Activated CD4-positive, alpha-beta T cell treated with anti-CD3 and anti-CD28 coated beads for 36 hours (primary cell): ENCODE measurements at regions of chr17 and their contacts with region 1.

Region 1: DNA sequence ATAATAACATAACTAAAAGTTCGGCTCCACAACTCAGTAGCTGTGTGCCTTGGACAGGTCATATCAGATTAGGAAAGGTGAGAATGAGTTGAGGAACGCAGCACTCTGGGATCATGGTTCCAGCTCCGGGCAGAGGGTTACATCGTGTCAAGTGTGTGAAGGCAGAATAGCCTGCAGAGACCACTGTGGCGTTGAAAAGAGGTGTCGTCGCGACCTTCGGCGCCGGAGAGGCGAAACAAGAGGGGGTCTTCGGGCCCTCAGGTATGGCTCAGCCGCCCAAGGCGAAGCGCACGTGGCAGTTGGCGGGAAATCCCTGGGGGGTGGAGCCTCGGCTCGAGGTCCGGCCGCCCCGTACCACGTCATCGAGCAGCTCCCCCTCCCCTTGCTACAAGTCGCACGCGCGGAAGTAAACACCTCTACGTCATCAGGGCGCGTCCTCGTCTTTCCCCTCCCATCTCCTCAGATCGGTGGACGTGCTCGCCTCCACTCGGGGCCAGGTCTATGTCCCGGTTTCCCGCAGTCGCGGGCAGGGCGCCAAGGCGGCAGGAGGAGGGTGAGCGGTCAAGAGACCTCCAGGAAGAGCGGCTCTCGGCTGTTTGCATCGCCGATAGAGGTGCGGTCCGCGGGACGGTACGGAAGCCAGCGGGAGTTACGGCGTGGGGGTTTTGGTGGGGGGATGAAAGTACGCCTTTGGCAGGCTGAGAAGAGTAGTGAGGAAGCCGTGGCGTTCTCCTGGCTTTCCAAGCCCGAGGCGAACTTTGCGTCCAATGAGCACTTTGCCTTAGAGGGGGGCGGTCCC is at the start of gene DHX40:
- DNase-seq: peak; percentile 98
- ATAC-seq: peak; percentile 89
- H3K4me3 Mint-ChIP-seq: peak within 1 kb of the TSS; percentile 99
- H3K27ac Mint-ChIP-seq: peak within 1 kb of the TSS; percentile 99
- H3K4me1 Mint-ChIP-seq: peaks cover 20% of the 10 kb centered on the region
- H3K27me3 Mint-ChIP-seq: no peaks in the 10 kb centered on the region
- total RNA-seq, gene DHX40: 22.9 to 24.1 TPM

Region 2: DNA sequence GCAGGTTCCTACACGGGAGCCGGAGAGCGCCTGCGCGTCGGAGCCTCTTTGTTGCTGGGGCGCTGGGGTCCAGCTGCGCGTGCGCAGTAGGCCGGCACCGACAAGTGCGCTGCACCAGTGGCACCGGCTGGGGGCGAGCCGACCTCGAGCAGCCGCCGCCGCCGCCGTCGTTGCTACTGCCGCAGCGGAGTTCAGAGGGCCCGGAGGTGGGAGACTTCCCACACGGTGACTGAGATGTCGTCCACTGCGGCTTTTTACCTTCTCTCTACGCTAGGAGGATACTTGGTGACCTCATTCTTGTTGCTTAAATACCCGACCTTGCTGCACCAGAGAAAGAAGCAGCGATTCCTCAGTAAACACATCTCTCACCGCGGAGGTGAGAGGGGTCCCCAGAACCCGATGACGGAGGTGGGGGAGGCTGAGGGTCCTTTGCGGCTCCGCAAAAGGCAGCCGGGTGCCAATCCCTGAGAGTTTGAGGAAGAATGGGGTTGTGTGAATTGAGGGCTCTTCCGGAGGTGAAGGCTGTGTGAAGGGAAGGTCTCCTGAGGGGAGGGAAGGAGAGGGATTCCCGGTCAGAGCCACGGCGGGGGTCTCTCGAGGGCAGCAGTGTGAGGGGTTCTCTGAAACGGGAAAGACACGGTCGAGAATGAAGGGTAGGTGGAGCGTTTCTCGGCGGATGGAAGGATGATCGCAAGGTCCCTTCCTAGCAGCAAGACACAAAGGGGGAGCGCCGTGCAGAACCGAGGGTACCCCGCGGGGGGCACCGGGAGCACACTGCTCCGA is 344.8 kb before region 1 on chr17 and contains the start of gene GDPD1:
- CTCF ChIA-PET with region 1: no interaction called
- POLR2A ChIA-PET with region 1: no interaction called
- intact Hi-C with region 1: loop called in 1 of 2 experiments (anchors 1 kb)
- DNase-seq: peak; percentile 99
- ATAC-seq: peak; percentile 99
- H3K4me3 Mint-ChIP-seq: peak within 1 kb of the TSS; percentile 93
- H3K27ac Mint-ChIP-seq: peak within 1 kb of the TSS; percentile 86
- H3K4me1 Mint-ChIP-seq: peaks cover 12% of the 10 kb centered on the region
- H3K27me3 Mint-ChIP-seq: no peaks in the 10 kb centered on the region
- total RNA-seq, gene GDPD1: 2.5 to 2.7 TPM

Region 3: DNA sequence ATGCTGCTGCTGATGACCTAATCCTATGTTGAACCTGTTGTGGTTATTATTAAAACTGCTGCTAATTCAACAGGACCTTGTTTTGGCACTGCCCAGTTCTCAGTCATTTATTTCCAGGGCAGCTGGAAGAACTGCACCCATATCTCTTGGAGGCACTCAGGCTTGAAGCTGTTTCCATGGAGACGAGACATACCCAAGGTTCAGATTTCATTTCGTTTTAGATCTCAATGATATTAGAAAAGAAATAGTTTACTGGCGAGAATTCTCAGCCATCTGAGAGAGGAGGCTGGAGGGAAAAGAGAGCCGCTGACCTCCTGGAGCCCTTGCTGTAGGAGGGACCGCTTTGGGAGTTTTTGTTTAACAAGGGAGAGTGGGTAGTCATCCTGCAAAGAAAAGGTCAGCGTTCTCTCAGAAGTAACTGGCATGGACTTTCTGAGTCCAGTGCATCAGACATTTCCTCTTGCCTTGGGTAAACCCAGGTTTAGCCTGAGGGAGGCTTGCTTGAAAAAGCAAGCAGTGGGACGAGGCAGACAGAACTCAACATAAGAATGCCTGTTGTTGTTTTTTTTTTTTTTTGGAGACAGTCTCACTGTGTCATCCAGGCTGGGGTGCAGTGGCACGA is 158.5 kb before region 1 on chr17:
- CTCF ChIA-PET with region 1: no interaction called
- POLR2A ChIA-PET with region 1: no interaction called
- intact Hi-C with region 1: no loop called
- DNase-seq: no peak
- ATAC-seq: no peak
- H3K4me3 Mint-ChIP-seq: no peak overlapping the region
- H3K27ac Mint-ChIP-seq: no peak overlapping the region
- H3K4me1 Mint-ChIP-seq: no peaks in the 10 kb centered on the region
- H3K27me3 Mint-ChIP-seq: no peaks in the 10 kb centered on the region

Region 4: GRCh38 chr17:59786536-59787319 is 221.4 kb after region 1 on chr17:
- CTCF ChIA-PET with region 1: no interaction called
- POLR2A ChIA-PET with region 1: no interaction called
- intact Hi-C with region 1: no loop called
- DNase-seq: peak; percentile 86
- ATAC-seq: peak; percentile 84
- H3K4me3 Mint-ChIP-seq: peak overlapping the region; percentile 71
- H3K27ac Mint-ChIP-seq: peak overlapping the region; percentile 96
- H3K4me1 Mint-ChIP-seq: peaks cover 68% of the 10 kb centered on the region
- H3K27me3 Mint-ChIP-seq: no peaks in the 10 kb centered on the region

Region 5: DNA sequence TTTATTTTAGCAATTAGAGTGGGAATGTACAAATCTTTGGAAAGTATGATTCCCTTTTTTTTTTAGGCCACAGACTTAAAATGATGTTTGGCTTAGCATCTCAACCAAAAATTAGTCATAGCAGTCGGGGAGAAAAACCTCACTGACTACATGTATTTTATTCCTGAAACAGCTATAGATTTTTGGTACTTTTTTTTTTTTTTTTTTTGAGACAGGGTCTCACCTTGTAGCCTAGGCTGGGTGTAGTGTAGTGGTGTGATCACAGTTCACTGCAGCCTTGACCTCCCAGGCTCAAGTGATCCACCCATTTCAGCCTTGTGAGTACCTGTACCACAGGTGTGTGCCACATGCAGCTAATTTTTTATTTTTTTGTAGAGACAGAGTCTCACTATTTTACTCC is 375.8 kb after region 1 on chr17:
- CTCF ChIA-PET with region 1: no interaction called
- POLR2A ChIA-PET with region 1: no interaction called
- intact Hi-C with region 1: loop called in 1 of 2 experiments (anchors 5 kb)
- DNase-seq: peak; percentile 31
- ATAC-seq: peak; percentile 51
- H3K4me3 Mint-ChIP-seq: peak overlapping the region; percentile 27
- H3K27ac Mint-ChIP-seq: peak overlapping the region; percentile 94
- H3K4me1 Mint-ChIP-seq: peaks cover 53% of the 10 kb centered on the region
- H3K27me3 Mint-ChIP-seq: no peaks in the 10 kb centered on the region

Region 6: GRCh38 chr17:60077672-60078519 is 512.5 kb after region 1 on chr17:
- CTCF ChIA-PET with region 1: no interaction called
- POLR2A ChIA-PET with region 1: no interaction called
- intact Hi-C with region 1: loop called in 1 of 2 experiments (anchors 2 kb)
- DNase-seq: peak; percentile 81
- ATAC-seq: peak; percentile 73
- H3K4me3 Mint-ChIP-seq: peak overlapping the region; percentile 84
- H3K27ac Mint-ChIP-seq: peak overlapping the region; percentile 95
- H3K4me1 Mint-ChIP-seq: peaks cover 19% of the 10 kb centered on the region
- H3K27me3 Mint-ChIP-seq: no peaks in the 10 kb centered on the region